GM10248 (cell line): ENCODE measurements at regions of chr9 and their contacts with region 1.

Region 1: GRCh38 chr9:34591248-34591916 is 1.9 kb upstream of the CNTFR start:
- DNase-seq: peak; percentile 91
- CTCF ChIP-seq: peak; percentile 95

Region 2: GRCh38 chr9:34437006-34437925 is 154.1 kb before region 1 on chr9:
- CTCF ChIA-PET with region 1: interaction called, 10 read pairs
- POLR2A ChIA-PET with region 1: no interaction called
- DNase-seq: peak; percentile 70
- CTCF ChIP-seq: peak; percentile 83

Region 3: DNA sequence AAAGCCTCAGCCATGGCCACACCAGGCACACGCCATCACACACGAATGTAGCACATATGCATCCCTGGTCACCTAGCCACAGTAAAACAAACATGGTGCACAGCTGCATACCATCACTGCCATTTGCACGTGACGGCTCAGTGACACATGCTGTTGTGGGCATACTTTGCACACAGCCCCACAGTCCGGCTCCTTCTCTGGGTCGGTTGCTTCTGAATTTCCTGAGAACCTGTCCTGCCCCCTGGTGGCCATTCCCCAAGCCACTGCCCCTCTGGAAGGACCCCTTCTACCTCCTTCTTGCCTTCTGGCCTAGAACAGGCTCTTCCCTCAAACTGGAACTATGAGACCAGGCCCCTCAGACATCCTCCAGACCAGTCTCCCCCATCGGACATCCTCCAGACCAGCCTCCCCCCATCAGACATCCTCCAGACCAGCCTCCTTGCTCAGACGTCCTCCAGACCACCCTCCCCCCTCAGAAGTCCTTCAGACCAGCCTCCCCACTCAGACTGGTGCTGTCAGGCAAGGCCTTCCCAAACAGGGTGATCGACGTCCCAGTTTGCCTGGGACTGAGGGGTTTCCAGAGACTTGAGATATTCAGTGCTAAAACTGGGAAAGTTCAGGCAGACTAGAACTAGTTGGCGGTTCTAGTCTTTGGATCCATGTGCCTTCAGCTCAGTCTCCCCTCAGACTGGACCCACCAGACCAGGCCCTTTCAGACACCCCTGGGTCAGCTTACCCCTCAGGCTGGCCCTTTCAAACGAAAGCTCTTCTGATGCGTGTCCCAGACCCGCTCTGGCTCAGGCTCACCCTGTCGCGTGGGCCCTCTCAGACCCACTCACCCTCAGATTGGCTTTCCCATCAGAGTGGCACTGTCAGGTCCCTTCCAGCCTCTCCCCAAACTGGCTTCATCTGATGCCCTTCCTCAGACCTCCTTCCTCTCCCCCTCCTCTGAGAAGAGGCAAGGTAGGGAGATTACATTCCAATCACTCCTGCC is 44.3 kb before region 1 on chr9:
- CTCF ChIA-PET with region 1: interaction called, 43 read pairs
- POLR2A ChIA-PET with region 1: no interaction called
- DNase-seq: peak; percentile 58
- CTCF ChIP-seq: peak; percentile 52

Region 4: DNA sequence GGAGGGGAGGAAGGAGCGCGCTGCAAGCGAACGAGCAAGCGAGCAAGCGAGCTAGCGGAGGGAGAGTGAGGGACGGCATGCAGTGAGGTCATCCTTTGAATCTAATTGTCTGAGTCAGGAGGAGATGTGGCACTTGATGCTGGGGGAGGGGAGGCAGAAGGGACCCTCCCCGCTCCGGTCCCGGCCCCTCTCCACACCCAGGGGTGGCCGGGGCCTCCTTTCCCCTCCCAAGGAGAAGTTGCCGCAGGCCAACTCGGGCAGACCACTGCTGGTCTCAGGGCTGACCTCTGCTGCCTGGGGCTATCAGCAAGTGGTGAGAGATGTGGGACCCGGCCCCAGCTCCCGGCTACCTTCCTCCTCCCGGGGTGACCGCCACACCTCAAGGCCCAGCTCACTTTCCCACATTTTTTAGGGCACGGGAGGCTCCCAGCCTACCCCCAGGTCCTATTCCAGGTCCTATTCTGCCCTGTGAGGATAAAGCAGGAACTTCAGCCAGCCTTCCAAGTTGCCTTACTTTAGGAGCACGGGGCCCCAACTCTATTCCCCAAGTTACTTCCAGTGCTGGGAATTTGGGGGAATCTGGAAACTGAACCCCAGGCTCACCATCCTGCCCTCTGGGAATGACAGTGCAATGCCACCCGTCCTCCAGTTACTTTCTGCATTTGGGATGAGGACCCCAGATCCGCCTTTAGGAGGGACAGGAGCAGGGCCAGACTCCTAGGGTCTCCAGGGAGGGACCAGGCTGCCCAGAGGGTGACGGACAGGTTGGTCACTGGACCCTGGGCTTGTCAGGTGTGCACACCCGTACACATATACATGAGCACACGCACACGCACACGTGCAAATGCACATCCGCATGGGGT is 12.9 kb before region 1 on chr9:
- CTCF ChIA-PET with region 1: interaction called, 27 read pairs
- POLR2A ChIA-PET with region 1: no interaction called
- DNase-seq: no peak
- CTCF ChIP-seq: no peak

Region 5: DNA sequence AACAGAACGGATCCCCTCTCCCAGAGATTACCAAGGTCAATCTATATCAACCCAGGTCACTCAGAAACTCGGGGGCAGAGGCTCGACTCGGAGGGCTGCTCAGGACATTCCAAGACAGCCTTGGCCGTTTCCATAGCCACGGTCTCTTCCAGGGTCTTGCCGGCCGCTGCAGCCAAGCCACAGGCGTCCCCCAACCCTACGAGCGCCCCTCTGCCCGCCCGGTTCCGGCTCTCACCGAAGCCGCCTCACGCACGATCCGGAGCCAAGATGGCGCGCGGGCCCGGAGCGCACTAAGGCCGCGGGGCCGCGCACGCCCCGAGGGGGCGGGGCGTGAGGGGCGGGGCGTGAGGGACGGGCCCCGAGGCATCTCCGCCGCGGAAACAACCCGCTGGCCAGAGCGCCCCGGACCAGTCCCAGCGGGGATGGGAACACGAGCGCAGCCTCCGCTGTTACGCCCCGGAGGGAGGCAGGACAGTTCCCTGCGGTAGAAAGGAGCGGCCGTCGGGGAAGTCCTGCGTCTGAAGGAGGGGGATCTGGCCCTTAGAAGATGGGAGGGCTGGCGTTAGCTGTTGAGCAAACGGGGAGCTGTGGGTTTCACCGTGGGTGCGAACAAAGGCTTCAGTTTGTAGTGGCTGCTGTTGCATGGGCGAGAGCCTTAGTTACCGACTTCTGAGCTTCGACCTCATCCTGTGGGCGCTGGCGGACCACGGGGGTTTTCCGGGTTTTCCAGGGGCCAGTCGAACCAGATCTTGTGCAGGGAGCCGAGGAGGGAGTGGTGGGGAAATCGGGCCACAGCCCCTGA is 20.6 kb after region 1 on chr9 and contains the start of gene RPP25L:
- CTCF ChIA-PET with region 1: interaction called, 46 read pairs
- POLR2A ChIA-PET with region 1: no interaction called
- DNase-seq: peak; percentile 96
- CTCF ChIP-seq: no peak

Region 6: GRCh38 chr9:35518226-35518821 is 926.9 kb after region 1 on chr9:
- CTCF ChIA-PET with region 1: no interaction called
- POLR2A ChIA-PET with region 1: no interaction called
- DNase-seq: no peak
- CTCF ChIP-seq: no peak